ENCODE measurements at regions of chr17 and their contacts with region 1.

Region 1: DNA sequence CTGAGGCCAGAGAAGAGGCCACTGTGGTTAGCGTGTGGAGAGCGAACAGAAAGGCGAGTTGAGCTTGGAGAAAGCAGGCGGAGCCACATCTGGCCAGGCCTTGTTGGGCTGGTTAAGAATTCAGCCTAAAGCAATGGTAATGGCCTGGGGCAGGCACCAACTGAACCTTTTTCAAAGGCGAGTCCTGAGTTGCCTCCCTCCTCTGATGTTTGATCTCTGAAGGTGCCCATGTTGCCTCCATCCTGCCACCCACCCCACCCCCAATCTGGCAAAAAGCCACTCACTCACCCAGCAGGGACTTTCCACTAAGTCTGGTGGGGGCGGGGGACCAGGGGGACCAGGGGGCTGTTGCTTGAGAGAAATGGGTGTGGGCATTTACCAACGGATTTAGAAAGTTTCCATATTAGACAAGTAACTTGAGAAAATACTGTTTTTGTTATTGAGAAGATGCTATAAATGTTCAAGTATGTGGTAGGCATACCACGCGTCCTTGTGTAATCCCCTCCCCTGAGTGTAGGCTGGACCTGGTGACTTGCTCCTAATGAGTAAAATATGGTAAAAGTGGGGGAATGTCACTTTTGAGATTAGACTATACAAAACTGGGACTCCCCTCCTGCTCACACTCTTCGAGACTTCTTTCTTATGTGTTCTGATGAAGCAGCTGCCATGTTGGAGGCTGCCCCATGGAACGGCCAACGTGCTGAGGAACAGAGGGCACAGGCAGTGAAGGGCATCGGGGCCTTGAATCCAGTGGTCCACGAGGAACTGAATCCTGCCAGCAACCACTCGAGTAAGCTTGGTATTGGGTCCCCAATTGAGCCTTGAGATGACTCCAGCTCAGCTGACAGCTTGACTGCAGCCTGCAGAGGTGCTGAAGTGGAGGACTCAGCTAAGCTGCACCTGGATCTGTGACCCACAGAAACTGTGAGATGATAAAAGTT is 29.9 kb upstream of the TNS4 start:
- DNase-seq: peak; percentile 75
- ATAC-seq: peak; percentile 15
- H3K4me3 ChIP-seq: no peak overlapping the region
- H3K4me3 Mint-ChIP-seq: peak overlapping the region; percentile 69
- H3K27ac ChIP-seq: peak overlapping the region; percentile 72 to 80
- H3K27ac Mint-ChIP-seq: peak overlapping the region; percentile 87
- H3K4me1 ChIP-seq: peaks cover 45 to 51% of the 10 kb centered on the region in 2 donors
- H3K4me1 Mint-ChIP-seq: peaks cover 61% of the 10 kb centered on the region
- H3K27me3 ChIP-seq: no peaks in the 10 kb centered on the region
- H3K27me3 Mint-ChIP-seq: no peaks in the 10 kb centered on the region
- CTCF ChIP-seq: no peak

Region 2: DNA sequence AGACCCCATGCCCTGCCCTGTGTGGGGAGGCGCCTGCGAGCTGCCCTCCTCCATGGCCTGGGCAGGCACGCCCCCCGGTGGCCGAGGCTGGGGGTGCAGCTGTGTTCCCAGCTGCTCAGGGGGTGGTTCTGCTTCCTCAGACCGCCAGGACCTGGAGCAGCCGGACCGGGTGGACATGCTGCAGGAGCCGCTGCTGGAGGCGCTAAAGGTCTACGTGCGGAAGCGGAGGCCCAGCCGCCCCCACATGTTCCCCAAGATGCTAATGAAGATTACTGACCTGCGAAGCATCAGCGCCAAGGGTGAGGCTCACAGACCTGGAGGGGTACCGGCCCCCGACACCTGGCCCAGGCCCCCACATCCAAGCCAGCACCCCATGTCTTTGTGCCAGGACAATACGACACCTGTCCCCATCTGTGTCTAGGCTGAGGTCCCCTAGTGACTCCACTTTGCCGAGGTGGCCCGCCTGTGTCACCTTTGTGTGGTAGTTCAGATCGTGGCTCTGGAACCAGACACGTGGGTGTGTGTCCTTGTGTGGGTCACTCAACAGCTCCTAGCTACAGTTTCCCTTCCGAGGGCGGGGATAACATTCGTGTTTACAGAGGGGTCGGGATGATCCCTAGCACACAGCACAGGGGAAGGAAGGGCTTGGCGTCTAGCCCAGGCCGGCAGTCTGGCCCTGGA is 176.1 kb before region 1 on chr17:
- CTCF ChIA-PET with region 1: interaction called, 114 read pairs
- POLR2A ChIA-PET with region 1: interaction called, 4 read pairs
- intact Hi-C with region 1: loop called (anchors 1 kb)
- DNase-seq: peak; percentile 86
- ATAC-seq: peak; percentile 72
- H3K4me3 ChIP-seq: no peak overlapping the region
- H3K4me3 Mint-ChIP-seq: no peak overlapping the region
- H3K27ac ChIP-seq: no peak overlapping the region
- H3K27ac Mint-ChIP-seq: peak overlapping the region; percentile 50
- H3K4me1 ChIP-seq: peaks cover 22 to 37% of the 10 kb centered on the region in 2 donors
- H3K4me1 Mint-ChIP-seq: peaks cover 36% of the 10 kb centered on the region
- H3K27me3 ChIP-seq: peaks cover 0 to 7% (median 0%) of the 10 kb centered on the region in 4 experiments
- H3K27me3 Mint-ChIP-seq: no peaks in the 10 kb centered on the region
- CTCF ChIP-seq: peak; percentile 98

Region 3: DNA sequence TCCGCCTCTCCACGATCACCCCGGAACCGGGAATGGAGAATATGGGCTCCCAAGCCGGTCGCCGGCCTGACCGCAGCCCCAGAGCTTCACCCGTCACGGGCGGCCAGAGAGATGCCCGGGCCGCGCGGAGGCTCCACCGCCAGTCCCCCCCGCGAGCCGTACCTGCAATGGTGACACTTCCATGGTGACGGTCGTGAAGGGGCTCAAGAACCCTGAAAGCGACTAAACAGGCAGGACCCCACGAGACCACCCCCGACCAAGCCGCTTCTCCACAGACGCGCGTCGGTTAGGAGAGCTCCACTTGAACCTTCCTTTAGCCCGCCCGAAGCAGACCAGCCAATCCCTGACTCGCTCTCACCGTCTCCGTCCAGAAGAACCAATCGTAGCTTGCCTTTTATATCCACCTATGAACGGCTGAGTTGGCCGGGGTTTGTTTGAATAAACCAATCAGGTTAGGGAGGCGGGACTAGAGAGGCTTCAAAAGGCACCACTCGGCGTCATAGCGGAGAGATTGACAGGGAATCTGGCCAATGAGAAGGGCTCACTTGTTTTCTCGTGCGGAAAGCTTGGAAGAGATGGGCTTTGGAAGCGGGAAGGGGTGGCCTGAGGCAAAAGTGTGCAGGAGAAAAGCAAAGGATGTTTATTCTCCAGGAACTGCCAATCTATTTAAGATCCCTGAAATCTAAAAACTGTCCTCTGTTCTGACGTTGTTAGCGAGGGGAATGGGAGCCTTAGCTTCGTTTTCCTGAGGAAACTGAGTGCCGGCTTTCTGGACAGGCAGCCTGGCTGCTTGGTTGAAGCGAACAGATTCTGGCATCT is 113.5 kb before region 1 on chr17 and contains the start of gene TOP2A:
- CTCF ChIA-PET with region 1: interaction called, 59 read pairs
- POLR2A ChIA-PET with region 1: interaction called, 3 read pairs
- intact Hi-C with region 1: loop called (anchors 1 kb)
- DNase-seq: peak; percentile 99
- ATAC-seq: peak; percentile 99
- H3K4me3 ChIP-seq: peak within 1 kb of the TSS; percentile 63 to 93 (median 84)
- H3K4me3 Mint-ChIP-seq: peak within 1 kb of the TSS; percentile 89
- H3K27ac ChIP-seq: peak within 1 kb of the TSS; percentile 63 to 72
- H3K27ac Mint-ChIP-seq: peak within 1 kb of the TSS; percentile 86
- H3K4me1 ChIP-seq: peaks cover 7 to 17% of the 10 kb centered on the region in 2 donors
- H3K4me1 Mint-ChIP-seq: peaks cover 15% of the 10 kb centered on the region
- H3K27me3 ChIP-seq: no peaks in the 10 kb centered on the region
- H3K27me3 Mint-ChIP-seq: no peaks in the 10 kb centered on the region
- CTCF ChIP-seq: no peak
- total RNA-seq, gene TOP2A: 3.0 and 3.1 TPM in 2 replicates

Region 4: GRCh38 chr17:40474419-40475002 is 56.8 kb before region 1 on chr17:
- CTCF ChIA-PET with region 1: interaction called, 52 read pairs
- POLR2A ChIA-PET with region 1: interaction called, 7 read pairs
- intact Hi-C with region 1: loop called (anchors 1 kb)
- DNase-seq: no peak
- ATAC-seq: no peak
- H3K4me3 ChIP-seq: no peak overlapping the region
- H3K4me3 Mint-ChIP-seq: no peak overlapping the region
- H3K27ac ChIP-seq: no peak overlapping the region
- H3K27ac Mint-ChIP-seq: no peak overlapping the region
- H3K4me1 ChIP-seq: peaks cover 12 to 23% of the 10 kb centered on the region in 2 donors
- H3K4me1 Mint-ChIP-seq: peaks cover 10% of the 10 kb centered on the region
- H3K27me3 ChIP-seq: peaks cover 0 to 4% (median 1%) of the 10 kb centered on the region in 4 experiments
- H3K27me3 Mint-ChIP-seq: no peaks in the 10 kb centered on the region
- CTCF ChIP-seq: no peak

Region 5: DNA sequence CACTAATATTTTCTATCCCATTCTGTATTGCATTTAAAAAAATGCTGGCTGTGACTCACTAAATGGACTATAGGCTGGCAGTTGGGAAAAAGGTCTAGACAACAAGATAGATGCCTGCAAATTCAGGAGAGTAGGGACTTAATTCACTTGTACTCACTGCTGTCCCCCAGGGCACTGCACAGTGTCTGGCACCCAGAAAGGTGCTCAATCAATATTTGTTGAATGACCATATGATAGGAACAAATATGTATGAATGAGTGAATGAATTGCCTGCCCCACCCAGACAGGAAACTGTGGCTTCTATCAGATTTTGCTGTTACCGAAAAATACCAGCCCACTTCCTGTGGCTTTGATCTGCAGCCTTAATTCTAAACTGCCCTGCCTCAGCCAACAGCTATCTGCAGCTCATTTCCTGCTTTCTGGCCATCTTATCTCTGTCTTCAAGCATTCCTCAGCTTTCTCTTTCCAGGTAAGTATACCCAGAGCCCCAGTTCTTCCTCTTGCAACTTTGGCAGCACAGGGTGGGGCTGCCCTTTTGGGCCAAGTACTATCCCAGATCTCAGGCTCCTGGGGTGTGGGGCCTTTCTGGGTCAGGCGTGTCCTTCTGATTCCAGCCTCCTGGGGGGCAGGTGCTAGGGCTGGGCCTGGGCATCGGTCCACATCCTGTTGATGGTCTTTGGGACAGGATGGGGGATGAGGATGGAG is 14.6 kb before region 1 on chr17:
- CTCF ChIA-PET with region 1: interaction called, 46 read pairs
- POLR2A ChIA-PET with region 1: interaction called, 6 read pairs
- intact Hi-C with region 1: loop called (anchors 2 kb)
- DNase-seq: peak; percentile 74
- ATAC-seq: peak; percentile 88
- H3K4me3 ChIP-seq: peak overlapping the region; percentile 3 to 52 (median 40)
- H3K4me3 Mint-ChIP-seq: peak overlapping the region; percentile 89
- H3K27ac ChIP-seq: no peak overlapping the region
- H3K27ac Mint-ChIP-seq: peak overlapping the region; percentile 81
- H3K4me1 ChIP-seq: peaks cover 46 to 56% of the 10 kb centered on the region in 2 donors
- H3K4me1 Mint-ChIP-seq: peaks cover 62% of the 10 kb centered on the region
- H3K27me3 ChIP-seq: no peaks in the 10 kb centered on the region
- H3K27me3 Mint-ChIP-seq: no peaks in the 10 kb centered on the region
- CTCF ChIP-seq: no peak

Region 6: GRCh38 chr17:40559954-40560591 is 28.8 kb after region 1 on chr17:
- CTCF ChIA-PET with region 1: interaction called, 329 read pairs
- POLR2A ChIA-PET with region 1: interaction called, 60 read pairs
- intact Hi-C with region 1: loop called (anchors 1 kb)
- DNase-seq: peak; percentile 88
- ATAC-seq: peak; percentile 46
- H3K4me3 ChIP-seq: peak overlapping the region; percentile 34 to 90 (median 83)
- H3K4me3 Mint-ChIP-seq: peak overlapping the region; percentile 92
- H3K27ac ChIP-seq: peak overlapping the region; percentile 90 to 98
- H3K27ac Mint-ChIP-seq: peak overlapping the region; percentile 94
- H3K4me1 ChIP-seq: peaks cover 79 to 99% of the 10 kb centered on the region in 2 donors
- H3K4me1 Mint-ChIP-seq: peaks cover 79% of the 10 kb centered on the region
- H3K27me3 ChIP-seq: no peaks in the 10 kb centered on the region
- H3K27me3 Mint-ChIP-seq: no peaks in the 10 kb centered on the region
- CTCF ChIP-seq: peak; percentile 97